Dendritic cell treated with granulocyte-macrophage colony-stimulating factor and Interleukin-4, amounts not matched to agents 40 ng/mL and 50 ng/mL, for 4 days (primary cell): ENCODE measurements at regions of chr6 and their contacts with region 1.

Region 1: GRCh38 chr6:143149771-143150170 is 89.1 kb downstream of the AIG1 start:
- H3K4me3 Mint-ChIP-seq: no peak overlapping the region
- H3K27ac Mint-ChIP-seq: no peak overlapping the region
- H3K4me1 Mint-ChIP-seq: peaks cover 21% of the 10 kb centered on the region
- H3K27me3 Mint-ChIP-seq: no peaks in the 10 kb centered on the region

Region 2: GRCh38 chr6:142045380-142046278 is 1104.1 kb before region 1 on chr6:
- intact Hi-C with region 1: no loop called
- H3K4me3 Mint-ChIP-seq: no peak overlapping the region
- H3K27ac Mint-ChIP-seq: no peak overlapping the region
- H3K4me1 Mint-ChIP-seq: no peaks in the 10 kb centered on the region
- H3K27me3 Mint-ChIP-seq: no peaks in the 10 kb centered on the region

Region 3: GRCh38 chr6:143060354-143060805 is 89.4 kb before region 1 on chr6:
- intact Hi-C with region 1: no loop called
- H3K4me3 Mint-ChIP-seq: peak overlapping the region; percentile 82
- H3K27ac Mint-ChIP-seq: peak overlapping the region; percentile 96
- H3K4me1 Mint-ChIP-seq: peaks cover 41% of the 10 kb centered on the region
- H3K27me3 Mint-ChIP-seq: peaks cover 2% of the 10 kb centered on the region

Region 4: GRCh38 chr6:143136647-143137046 is 13.1 kb before region 1 on chr6:
- intact Hi-C with region 1: loop called (anchors 1 kb)
- H3K4me3 Mint-ChIP-seq: no peak overlapping the region
- H3K27ac Mint-ChIP-seq: no peak overlapping the region
- H3K4me1 Mint-ChIP-seq: peaks cover 15% of the 10 kb centered on the region
- H3K27me3 Mint-ChIP-seq: no peaks in the 10 kb centered on the region